ENCODE measurements at regions of chr2 and their contacts with region 1.

Region 1: GRCh38 chr2:168643979-168644378 is 158.5 kb upstream of the NOSTRIN start:
- DNase-seq: no peak

Region 2: GRCh38 chr2:168526641-168527040 is 117.3 kb before region 1 on chr2:
- intact Hi-C with region 1: loop called (anchors 5 kb)
- DNase-seq: no peak

Region 3: DNA sequence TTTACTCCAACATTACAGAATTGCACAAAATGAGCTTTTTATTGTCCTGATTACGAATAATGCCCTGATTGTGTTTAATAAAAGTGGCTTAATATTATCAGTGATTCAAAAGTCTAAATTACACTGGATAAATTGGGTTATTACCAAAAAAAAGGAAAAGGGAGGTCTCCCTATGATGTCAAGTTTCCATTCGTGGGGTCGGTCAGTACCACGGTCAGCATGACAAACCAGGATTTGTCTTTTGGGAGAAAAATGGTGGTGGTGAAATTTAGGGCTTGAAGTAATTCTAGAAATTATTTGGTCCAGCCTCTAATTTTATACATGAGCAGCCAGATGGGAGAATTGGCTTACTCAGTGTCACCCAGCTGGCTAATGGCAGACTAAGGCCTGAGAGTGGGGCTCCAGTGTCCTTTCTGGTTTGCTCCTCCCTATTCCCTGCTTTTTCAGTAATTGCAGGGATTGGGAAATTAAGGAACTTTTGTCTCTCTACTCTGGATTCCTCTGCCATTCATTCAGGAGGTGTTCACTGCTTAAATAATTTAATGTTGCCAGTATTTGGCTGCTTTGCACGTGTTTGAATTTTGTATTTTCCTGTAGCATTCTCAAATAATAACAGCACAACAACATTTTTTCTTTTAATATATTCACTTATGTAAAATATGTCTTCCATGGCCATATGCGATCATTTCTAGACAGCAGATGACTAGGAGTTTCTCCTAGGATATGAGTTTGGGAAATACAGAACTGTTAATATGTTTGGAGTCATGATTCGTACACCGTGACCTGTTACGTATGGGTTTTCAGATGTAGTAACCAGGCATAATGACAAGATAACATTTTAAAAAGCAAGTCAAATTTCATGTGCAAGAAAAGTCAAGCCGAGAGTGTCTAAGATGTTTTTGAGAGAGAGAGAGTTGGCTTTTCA is 29.5 kb after region 1 on chr2:
- intact Hi-C with region 1: no loop called
- DNase-seq: no peak

Region 4: DNA sequence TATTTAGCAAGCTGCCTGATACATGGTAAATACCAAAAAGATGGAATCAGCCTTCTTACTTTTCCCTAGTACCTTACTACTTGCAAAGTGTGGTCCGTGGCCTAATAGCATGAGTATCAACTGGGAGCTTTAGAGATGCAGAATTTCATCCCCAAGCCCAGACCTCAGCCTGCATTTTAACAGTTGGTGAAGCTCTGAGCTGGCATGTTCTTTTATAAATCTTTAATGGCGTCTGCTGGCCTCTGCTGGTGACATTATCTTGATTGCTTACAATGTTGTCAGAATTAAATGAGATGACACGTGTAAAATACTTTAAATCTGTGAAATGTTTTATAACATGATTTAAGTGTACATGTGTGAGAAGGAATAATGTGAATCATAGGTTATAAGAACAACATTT is 43.3 kb after region 1 on chr2:
- intact Hi-C with region 1: loop called (anchors 5 kb)
- DNase-seq: no peak

Region 5: DNA sequence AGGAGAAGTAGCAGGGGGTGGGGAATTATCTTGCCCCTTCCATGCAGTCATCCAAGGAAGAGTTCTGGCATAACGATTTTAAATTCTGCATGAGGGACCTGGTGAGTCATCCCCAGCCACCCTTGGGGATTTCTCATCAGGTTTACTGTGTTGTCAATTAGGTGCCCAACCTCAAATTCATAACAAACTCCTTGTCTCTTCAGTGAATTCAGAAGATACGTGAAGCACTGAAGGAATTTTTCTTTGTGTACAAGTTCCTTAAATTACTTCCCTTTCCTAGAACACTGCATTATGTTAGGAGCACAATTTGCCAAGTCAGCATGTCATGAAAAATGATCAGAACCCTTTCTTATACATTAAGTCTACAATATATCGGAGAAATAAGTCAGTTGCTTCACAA is 87.6 kb after region 1 on chr2:
- intact Hi-C with region 1: loop called (anchors 5 kb)
- DNase-seq: no peak

Region 6: DNA sequence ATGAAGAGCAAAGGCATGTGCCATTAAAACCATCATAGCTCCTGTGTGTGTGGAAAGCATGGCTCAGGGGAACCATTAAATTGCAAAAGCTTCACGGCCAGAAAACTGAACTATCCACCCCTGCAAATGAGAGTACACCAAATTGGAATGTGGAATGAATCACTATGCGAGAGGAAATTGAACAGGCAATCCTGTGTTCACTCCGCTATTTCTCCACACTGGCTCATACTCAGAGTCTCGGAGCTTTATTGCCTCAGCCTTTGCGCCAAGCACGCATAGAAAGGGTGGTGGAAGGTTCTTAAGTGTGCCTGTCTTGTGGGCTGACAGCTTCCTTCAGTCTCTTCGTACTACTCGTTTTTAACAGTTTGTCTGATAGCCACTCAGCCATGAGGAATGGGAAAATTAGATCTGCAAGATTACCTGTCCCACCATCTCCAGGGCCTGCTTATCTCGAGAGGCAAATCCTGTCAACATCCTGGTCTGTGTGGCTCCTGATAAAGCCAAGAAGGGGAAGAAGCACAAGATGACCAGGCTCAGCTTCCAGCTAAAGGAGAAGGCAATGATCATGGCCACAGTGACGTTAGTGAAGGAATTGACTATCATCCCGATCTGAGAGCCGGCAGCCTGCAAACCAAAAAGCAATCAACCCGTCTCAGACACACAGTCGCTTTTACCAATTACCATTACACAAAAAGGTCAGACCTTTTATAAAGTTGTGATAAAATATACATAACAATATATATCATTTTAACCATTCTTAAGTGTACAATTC is 292.0 kb after region 1 on chr2:
- intact Hi-C with region 1: no loop called
- DNase-seq: no peak